ENCODE measurements at regions of chr1 and their contacts with region 1.

Region 1: GRCh38 chr1:6393400-6394187 is at the start of gene ACOT7:
- H3K4me3 Mint-ChIP-seq: peak within 1 kb of the TSS; percentile 86
- H3K27ac Mint-ChIP-seq: peak within 1 kb of the TSS; percentile 98
- H3K4me1 Mint-ChIP-seq: peaks cover 35% of the 10 kb centered on the region
- H3K27me3 Mint-ChIP-seq: peaks cover 21% of the 10 kb centered on the region

Region 2: DNA sequence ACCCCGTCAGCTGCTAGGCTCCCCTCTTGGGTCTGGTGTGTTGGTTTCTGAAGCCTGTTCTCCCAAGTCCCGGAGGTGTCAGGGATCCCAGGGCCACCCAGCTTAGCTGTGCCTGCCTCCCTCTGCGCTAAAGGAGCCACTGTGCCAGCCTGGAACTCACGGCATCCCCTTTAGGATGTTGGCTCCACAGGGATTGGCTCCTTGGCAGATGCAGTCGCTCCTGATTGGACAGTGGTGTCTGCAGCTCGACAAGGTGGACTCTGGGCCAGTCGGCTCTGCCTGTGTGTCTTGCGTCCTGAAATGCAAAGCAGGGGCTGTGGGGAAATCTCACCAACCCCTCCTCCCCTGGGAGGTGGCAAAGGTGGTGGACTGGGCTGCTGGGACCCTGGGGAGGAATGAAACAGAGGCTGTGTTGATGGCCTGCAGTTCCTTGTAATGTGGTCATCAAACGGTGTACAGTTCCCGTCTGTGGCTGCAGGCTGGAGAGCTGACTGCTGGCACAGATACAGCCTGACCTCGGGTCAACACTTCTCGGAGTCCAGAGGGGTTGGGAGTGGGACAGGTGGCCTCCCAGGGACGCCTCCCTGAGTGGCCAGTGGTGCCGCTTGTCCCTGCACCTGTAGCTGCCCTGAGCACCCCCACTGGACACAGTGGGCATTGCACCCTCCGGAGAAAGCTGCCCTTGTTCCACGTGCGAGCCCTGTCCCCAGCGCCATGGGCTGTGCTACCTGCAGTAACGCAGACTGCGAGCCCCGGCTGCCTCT is 359.4 kb before region 1 on chr1:
- intact Hi-C with region 1: no loop called
- H3K4me3 Mint-ChIP-seq: no peak overlapping the region
- H3K27ac Mint-ChIP-seq: no peak overlapping the region
- H3K4me1 Mint-ChIP-seq: peaks cover 100% of the 10 kb centered on the region
- H3K27me3 Mint-ChIP-seq: no peaks in the 10 kb centered on the region

Region 3: GRCh38 chr1:6199298-6200187 is 194.1 kb before region 1 on chr1 and contains the start of gene RPL22:
- intact Hi-C with region 1: loop called (anchors 5 kb)
- H3K4me3 Mint-ChIP-seq: peak within 1 kb of the TSS; percentile 79
- H3K27ac Mint-ChIP-seq: peak within 1 kb of the TSS; percentile 95
- H3K4me1 Mint-ChIP-seq: peaks cover 33% of the 10 kb centered on the region
- H3K27me3 Mint-ChIP-seq: peaks cover 24% of the 10 kb centered on the region